ENCODE measurements at regions of chr3 and their contacts with region 1.

Region 1: DNA sequence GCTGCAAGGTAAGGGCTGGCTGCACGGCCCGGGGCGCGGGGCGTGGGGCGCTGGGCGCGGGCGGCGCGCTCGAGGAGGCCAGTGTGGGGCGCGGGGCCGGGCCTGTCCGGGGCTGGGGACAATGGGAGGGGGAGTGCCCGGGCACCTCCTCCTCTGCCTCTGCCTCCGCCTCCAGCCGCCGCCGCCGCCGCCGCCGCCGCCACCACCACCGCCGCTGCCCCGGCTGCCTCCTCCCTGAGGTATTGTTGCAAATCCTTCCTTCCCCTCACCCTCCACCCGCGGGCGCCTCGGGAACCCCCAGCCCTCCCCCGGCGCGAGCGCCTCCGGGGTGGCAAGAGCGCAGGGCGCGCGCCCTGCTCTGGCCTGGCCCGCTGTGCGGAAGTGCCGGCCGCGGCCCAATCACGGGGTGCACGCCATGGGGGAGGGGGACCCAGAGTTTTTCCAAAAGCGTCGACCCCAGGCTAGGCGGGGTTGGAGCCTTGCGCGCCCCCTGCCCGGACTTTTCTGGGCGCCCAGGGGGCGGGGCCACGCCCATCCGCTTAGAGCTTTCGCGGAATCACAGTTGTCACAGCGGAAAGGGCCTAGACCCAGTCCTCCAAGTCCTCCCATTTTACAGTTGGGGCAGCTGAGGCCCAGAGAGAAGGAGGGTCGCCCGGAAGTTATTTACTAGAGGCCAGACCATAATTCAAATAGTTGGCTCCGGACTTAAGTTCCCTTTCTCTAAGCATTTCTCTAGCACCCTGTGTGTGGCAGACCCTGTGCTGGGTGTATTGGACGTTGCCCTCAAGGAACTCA is at the start of gene LPP:
- DNase-seq: peak; percentile 76 to 82
- ATAC-seq: peak; percentile 72 to 93 (median 82)
- H3K4me3 ChIP-seq: peak within 1 kb of the TSS; percentile 66 to 92 (median 80)
- H3K27ac ChIP-seq: peak within 1 kb of the TSS; percentile 90 to 99 (median 96)
- H3K4me1 ChIP-seq: peaks cover 0 to 67% (median 54%) of the 10 kb centered on the region in 9 donors
- H3K27me3 ChIP-seq: no peaks in the 10 kb centered on the region
- CTCF ChIP-seq: peak in 2 of 9 donors; percentile 23 to 26
- total RNA-seq, gene LPP: 116 to 188 (median 148) TPM

Region 2: GRCh38 chr3:187738331-187739093 is 415.7 kb before region 1 on chr3:
- intact Hi-C with region 1: loop called in 7 of 10 experiments (anchors 5 to 10 kb)
- DNase-seq: peak; percentile 75 to 97
- ATAC-seq: peak; percentile 60 to 82 (median 75)
- H3K4me3 ChIP-seq: peak overlapping the region; percentile 46 to 95 (median 73)
- H3K27ac ChIP-seq: peak overlapping the region; percentile 85 to 100 (median 99)
- H3K4me1 ChIP-seq: peaks cover 4 to 72% (median 38%) of the 10 kb centered on the region in 9 donors
- H3K27me3 ChIP-seq: no peaks in the 10 kb centered on the region
- CTCF ChIP-seq: peak; percentile 32 to 86 (median 73)

Region 3: DNA sequence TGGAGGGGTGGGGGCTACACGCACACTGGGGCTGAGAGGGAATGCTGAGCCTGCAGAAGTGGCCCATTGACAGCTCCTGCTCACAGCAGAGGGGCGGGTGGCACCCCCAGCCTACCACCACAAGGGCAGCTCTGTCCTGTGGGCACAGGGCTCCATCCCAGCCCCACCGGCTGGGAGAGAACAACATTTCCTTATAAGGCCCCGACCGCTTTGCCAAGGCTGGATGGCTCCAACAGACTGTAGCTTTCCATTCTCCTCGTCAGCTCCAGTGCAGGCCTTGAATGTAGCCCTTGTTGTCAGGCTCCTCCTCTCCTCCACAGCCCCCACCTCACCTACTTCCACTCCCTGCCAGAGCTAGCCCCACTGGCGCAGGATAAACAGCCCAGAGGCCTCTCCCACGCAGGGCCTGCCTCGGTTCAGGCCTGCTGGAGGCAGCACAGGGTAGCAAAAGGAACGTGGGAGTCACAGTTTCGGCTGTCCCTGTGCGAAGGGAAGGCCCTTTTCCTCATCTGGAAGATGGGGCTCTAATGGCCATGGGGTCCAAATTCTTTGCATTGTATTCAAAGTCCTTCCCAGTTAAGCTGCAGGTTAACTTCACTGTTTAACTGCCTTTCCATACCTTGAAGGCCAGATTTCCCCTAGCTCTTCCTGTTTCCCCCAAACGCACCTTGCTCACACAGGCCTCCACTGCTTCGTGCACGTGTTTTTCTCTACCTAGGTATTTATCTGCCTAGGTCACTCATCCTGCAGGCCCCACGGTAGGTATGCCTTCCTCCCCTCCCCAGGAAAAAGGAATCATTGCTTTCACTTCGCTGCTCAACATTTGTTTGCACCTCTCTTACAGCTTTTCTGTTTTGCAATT is 101.8 kb before region 1 on chr3:
- intact Hi-C with region 1: loop called in 3 of 10 experiments (anchors 5 to 10 kb)
- DNase-seq: peak; percentile 81 to 89
- ATAC-seq: peak; percentile 96 to 98 (median 97)
- H3K4me3 ChIP-seq: peak overlapping the region in 6 of 10 donors; percentile 3 to 34 (median 23)
- H3K27ac ChIP-seq: peak overlapping the region; percentile 66 to 89 (median 76)
- H3K4me1 ChIP-seq: peaks cover 6 to 34% (median 21%) of the 10 kb centered on the region in 9 donors
- H3K27me3 ChIP-seq: no peaks in the 10 kb centered on the region
- CTCF ChIP-seq: peak in 8 of 9 donors; percentile 26 to 77 (median 56)

Region 4: GRCh38 chr3:188262913-188263683 is 108.9 kb after region 1 on chr3:
- intact Hi-C with region 1: loop called in 4 of 10 experiments (anchors 5 to 10 kb)
- DNase-seq: peak in 1 of 2 donors; percentile 62
- ATAC-seq: peak; percentile 50 to 89 (median 84)
- H3K4me3 ChIP-seq: no peak overlapping the region
- H3K27ac ChIP-seq: peak overlapping the region; percentile 73 to 93 (median 86)
- H3K4me1 ChIP-seq: peaks cover 26 to 98% (median 74%) of the 10 kb centered on the region in 9 donors
- H3K27me3 ChIP-seq: no peaks in the 10 kb centered on the region
- CTCF ChIP-seq: no peak

Region 5: GRCh38 chr3:188348435-188349244 is 194.4 kb after region 1 on chr3:
- intact Hi-C with region 1: loop called in 3 of 10 experiments (anchors 10 kb)
- DNase-seq: peak; percentile 69 to 74
- ATAC-seq: peak; percentile 71 to 83 (median 76)
- H3K4me3 ChIP-seq: no peak overlapping the region
- H3K27ac ChIP-seq: peak overlapping the region; percentile 23 to 81 (median 63)
- H3K4me1 ChIP-seq: peaks cover 8 to 70% (median 45%) of the 10 kb centered on the region in 9 donors
- H3K27me3 ChIP-seq: no peaks in the 10 kb centered on the region
- CTCF ChIP-seq: no peak

Measured in heart right ventricle (tissue), 16 donors.